H1 (cell line): ENCODE measurements at regions of chr9 and their contacts with region 1.

Region 1: GRCh38 chr9:97220894-97221477 is 86.5 kb upstream of the CCDC180 start:
- DNase-seq: peak in 1 of 2 experiments; percentile 63
- H3K4me3 ChIP-seq: peak overlapping the region; percentile 65 to 98 (median 82)
- H3K27ac ChIP-seq: peak overlapping the region; percentile 96
- H3K4me1 ChIP-seq: no peaks in the 10 kb centered on the region
- H3K27me3 ChIP-seq: no peaks in the 10 kb centered on the region
- CTCF ChIP-seq: no peak
- EP300 ChIP-seq: no peak
- POLR2A ChIP-seq: peak; percentile 47 to 70; a peak in 2 of 3 replicates
- RAD21 ChIP-seq: no peak

Region 2: GRCh38 chr9:97237951-97238851 is 17.2 kb after region 1 on chr9:
- CTCF ChIA-PET with region 1: no interaction called
- POLR2A ChIA-PET with region 1: interaction called, 134 read pairs
- DNase-seq: peak in 1 of 2 experiments; percentile 86
- H3K4me3 ChIP-seq: peak overlapping the region; percentile 76 to 83 (median 80)
- H3K27ac ChIP-seq: peak overlapping the region; percentile 80
- H3K4me1 ChIP-seq: peaks cover 0 to 7% (median 2%) of the 10 kb centered on the region in 4 experiments; a peak in 3 of 7 replicates
- H3K27me3 ChIP-seq: no peaks in the 10 kb centered on the region
- CTCF ChIP-seq: no peak
- EP300 ChIP-seq: no peak
- POLR2A ChIP-seq: peak in 1 of 2 experiments; percentile 86; a peak in 2 of 3 replicates
- RAD21 ChIP-seq: no peak

Region 3: GRCh38 chr9:97271292-97271691 is 50.3 kb after region 1 on chr9:
- CTCF ChIA-PET with region 1: no interaction called
- POLR2A ChIA-PET with region 1: interaction called, 12 read pairs
- DNase-seq: peak in 1 of 2 experiments; percentile 68
- H3K4me3 ChIP-seq: peak overlapping the region in 2 of 4 experiments; percentile 29 to 47; a peak in 4 of 8 replicates
- H3K27ac ChIP-seq: no peak overlapping the region
- H3K4me1 ChIP-seq: peaks cover 2 to 5% (median 3%) of the 10 kb centered on the region in 4 experiments
- H3K27me3 ChIP-seq: no peaks in the 10 kb centered on the region
- CTCF ChIP-seq: no peak
- EP300 ChIP-seq: no peak
- POLR2A ChIP-seq: no peak
- RAD21 ChIP-seq: no peak

Region 4: GRCh38 chr9:97307091-97307490 is 86.1 kb after region 1 on chr9:
- CTCF ChIA-PET with region 1: no interaction called
- POLR2A ChIA-PET with region 1: interaction called, 15 read pairs
- DNase-seq: peak; percentile 71 to 97
- H3K4me3 ChIP-seq: peak overlapping the region in 1 of 4 experiments; percentile 26; a peak in 1 of 8 replicates
- H3K27ac ChIP-seq: no peak overlapping the region; the same call in 1 of the 2 replicates
- H3K4me1 ChIP-seq: peaks cover 0 to 11% (median 4%) of the 10 kb centered on the region in 4 experiments; a peak in 5 of 7 replicates
- H3K27me3 ChIP-seq: no peaks in the 10 kb centered on the region
- CTCF ChIP-seq: peak in 2 of 3 experiments; percentile 34 to 57; a peak in 2 of 4 replicates
- EP300 ChIP-seq: no peak
- POLR2A ChIP-seq: 0 out of 3 replicates have a peak, but pooled peaks of 1 of the 2 experiments have one; percentile 35
- RAD21 ChIP-seq: peak in 1 of 2 experiments; percentile 9; a peak in 2 of 4 replicates

Region 5: GRCh38 chr9:97357056-97357455 is 136.1 kb after region 1 on chr9:
- CTCF ChIA-PET with region 1: no interaction called
- POLR2A ChIA-PET with region 1: no interaction called
- DNase-seq: no peak
- H3K4me3 ChIP-seq: no peak overlapping the region
- H3K27ac ChIP-seq: no peak overlapping the region
- H3K4me1 ChIP-seq: no peaks in the 10 kb centered on the region
- H3K27me3 ChIP-seq: no peaks in the 10 kb centered on the region
- CTCF ChIP-seq: no peak
- EP300 ChIP-seq: no peak
- POLR2A ChIP-seq: no peak
- RAD21 ChIP-seq: no peak

Region 6: DNA sequence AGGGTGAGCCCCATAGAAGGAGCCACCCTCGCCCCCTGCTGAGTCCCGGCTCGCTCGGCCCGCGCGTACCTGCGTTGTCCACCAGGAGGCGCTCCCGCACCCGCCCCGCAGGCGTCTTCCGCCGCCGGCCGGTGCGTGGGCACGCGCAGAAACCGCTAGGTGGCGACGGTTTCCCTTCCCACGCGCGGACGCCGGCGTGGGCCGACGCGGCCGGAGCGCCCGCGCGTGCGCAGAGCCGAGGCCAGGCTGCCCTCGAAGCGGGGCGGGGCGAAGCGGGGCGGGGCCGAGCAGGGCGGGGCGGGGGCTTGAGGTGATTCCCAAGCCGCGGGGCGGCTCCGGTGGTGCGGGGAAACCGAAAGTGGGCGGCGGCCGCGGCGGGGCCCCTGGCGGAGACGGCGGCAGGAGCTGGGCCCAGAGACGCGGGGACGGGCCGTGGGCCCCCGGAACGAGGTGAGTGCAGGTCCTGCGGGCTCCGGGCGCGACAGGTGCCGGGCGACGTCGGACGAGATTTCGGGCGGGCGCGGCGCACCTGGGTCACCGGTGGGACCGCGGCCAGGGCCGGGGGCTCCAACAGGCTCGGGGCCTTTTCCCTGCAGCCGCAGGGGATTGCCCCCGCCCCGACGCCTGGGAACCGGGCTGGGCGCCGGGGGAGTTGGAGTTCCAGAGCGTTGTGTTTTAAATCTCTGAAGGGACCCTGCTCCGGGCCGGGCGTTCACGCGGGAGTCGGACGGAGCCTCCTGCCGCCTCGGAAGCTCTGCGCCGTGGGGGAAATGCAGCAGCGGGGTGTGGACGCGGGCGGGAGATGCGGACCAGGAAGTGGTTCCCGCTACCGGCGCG is 191.0 kb after region 1 on chr9 and contains the start of gene TDRD7:
- CTCF ChIA-PET with region 1: no interaction called
- POLR2A ChIA-PET with region 1: no interaction called
- DNase-seq: peak in 1 of 2 experiments; percentile 91
- H3K4me3 ChIP-seq: peak within 1 kb of the TSS; percentile 51 to 93 (median 70)
- H3K27ac ChIP-seq: no peak within 1 kb of the TSS
- H3K4me1 ChIP-seq: peaks cover 0 to 1% (median 0%) of the 10 kb centered on the region in 4 experiments; a peak in 1 of 7 replicates
- H3K27me3 ChIP-seq: peaks cover 4 to 22% (median 14%) of the 10 kb centered on the region in 4 experiments; a peak in 6 of 7 replicates
- CTCF ChIP-seq: peak; percentile 91 to 99 (median 94)
- EP300 ChIP-seq: peak in 1 of 2 experiments; percentile 57; a peak in 1 of 3 replicates
- POLR2A ChIP-seq: no peak
- RAD21 ChIP-seq: peak; percentile 55 to 75
- total RNA-seq, gene TDRD7: 2.1 and 2.3 TPM in 2 replicates